CD8-positive, alpha-beta T cell (primary cell): ENCODE measurements at regions of chr18 and their contacts with region 1.

Region 1: DNA sequence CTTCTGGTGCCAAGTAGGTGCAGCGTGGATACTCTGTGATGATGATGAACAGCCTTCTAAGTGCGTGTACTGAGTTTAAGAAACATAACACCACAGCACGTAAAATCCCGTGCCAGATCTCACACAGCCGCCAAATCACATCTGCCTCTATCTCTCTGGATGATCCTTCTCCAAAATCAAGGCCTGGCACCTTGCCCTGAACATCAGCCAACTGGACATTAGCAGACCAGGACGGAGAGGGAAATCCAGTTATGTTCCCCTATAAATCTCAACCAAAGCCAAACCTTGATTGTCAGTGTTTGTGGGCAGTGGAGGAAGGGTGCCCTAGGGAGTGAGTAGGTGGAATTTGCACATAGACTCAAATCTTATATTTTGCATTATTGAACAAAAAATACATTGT is 164.3 kb downstream of the MIB1 start:
- DNase-seq: no peak
- ATAC-seq: no peak
- H3K4me3 ChIP-seq: no peak overlapping the region
- H3K4me3 Mint-ChIP-seq: no peak overlapping the region
- H3K27ac ChIP-seq: no peak overlapping the region
- H3K27ac Mint-ChIP-seq: no peak overlapping the region
- H3K4me1 ChIP-seq: no peaks in the 10 kb centered on the region
- H3K4me1 Mint-ChIP-seq: no peaks in the 10 kb centered on the region
- H3K27me3 ChIP-seq: no peaks in the 10 kb centered on the region
- H3K27me3 Mint-ChIP-seq: peaks cover 9% of the 10 kb centered on the region
- CTCF ChIP-seq: no peak

Region 2: DNA sequence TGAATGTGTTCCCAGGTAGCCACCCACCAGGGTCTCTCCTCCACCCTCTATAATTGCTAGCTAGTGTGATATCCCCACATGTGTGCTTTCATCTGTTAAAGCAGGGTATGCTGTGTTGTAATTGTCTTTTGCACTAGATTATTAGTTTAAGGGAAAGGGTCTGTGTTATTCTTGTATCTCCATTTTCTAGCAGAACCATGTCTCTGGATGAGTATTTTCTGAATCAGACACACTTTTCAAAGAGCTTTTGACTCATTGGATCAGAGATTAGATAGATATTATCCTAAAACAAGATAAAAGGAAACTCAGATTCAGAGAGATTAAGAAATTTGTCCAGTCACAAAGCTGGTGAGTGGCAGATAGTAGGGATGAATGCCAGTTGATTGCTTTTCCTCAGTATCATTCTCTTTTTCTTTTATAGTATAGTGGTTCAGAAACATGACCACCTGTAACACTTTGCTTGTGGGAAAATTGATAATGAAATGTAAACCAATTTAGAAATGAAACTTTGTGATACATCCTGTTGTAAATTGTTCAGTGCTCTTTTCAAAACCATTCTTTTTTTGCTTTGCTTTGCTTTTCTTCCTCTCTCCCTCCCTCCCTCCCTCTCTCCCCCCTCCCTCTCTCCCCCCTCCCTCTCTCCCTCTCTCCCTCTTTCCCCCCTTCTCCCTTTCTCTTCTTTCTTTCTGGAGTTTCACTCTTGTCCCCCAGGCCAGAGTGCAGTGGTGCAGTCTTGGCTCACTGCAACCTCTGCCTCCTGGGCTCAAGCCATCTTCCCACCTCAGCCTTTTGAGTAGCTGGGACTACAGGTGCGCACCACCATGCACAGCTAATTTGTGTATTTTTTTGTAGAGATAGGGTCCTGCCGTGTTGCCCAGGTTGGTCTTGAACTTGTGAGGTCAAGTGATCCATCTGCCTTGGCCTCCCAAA is 156.8 kb before region 1 on chr18:
- CTCF ChIA-PET with region 1: no interaction called
- POLR2A ChIA-PET with region 1: no interaction called
- intact Hi-C with region 1: no loop called
- DNase-seq: peak in 2 of 9 experiments; percentile 5 to 22
- ATAC-seq: no peak
- H3K4me3 ChIP-seq: no peak overlapping the region
- H3K4me3 Mint-ChIP-seq: no peak overlapping the region
- H3K27ac ChIP-seq: no peak overlapping the region
- H3K27ac Mint-ChIP-seq: peak overlapping the region; percentile 22
- H3K4me1 ChIP-seq: peaks cover 20% of the 10 kb centered on the region
- H3K4me1 Mint-ChIP-seq: peaks cover 52% of the 10 kb centered on the region
- H3K27me3 ChIP-seq: no peaks in the 10 kb centered on the region
- H3K27me3 Mint-ChIP-seq: no peaks in the 10 kb centered on the region
- CTCF ChIP-seq: no peak

Region 3: GRCh38 chr18:21851327-21851972 is 53.4 kb before region 1 on chr18:
- CTCF ChIA-PET with region 1: no interaction called
- POLR2A ChIA-PET with region 1: no interaction called
- intact Hi-C with region 1: no loop called
- DNase-seq: peak in 2 of 9 experiments; percentile 4 to 25
- ATAC-seq: no peak
- H3K4me3 ChIP-seq: no peak overlapping the region
- H3K4me3 Mint-ChIP-seq: no peak overlapping the region
- H3K27ac ChIP-seq: no peak overlapping the region
- H3K27ac Mint-ChIP-seq: no peak overlapping the region
- H3K4me1 ChIP-seq: no peaks in the 10 kb centered on the region
- H3K4me1 Mint-ChIP-seq: peaks cover 7% of the 10 kb centered on the region
- H3K27me3 ChIP-seq: no peaks in the 10 kb centered on the region
- H3K27me3 Mint-ChIP-seq: no peaks in the 10 kb centered on the region
- CTCF ChIP-seq: peak; percentile 50

Region 4: GRCh38 chr18:21918693-21919092 is 13.8 kb after region 1 on chr18:
- CTCF ChIA-PET with region 1: no interaction called
- POLR2A ChIA-PET with region 1: no interaction called
- intact Hi-C with region 1: loop called in 1 of 2 experiments (anchors 1 kb)
- DNase-seq: no peak
- ATAC-seq: no peak
- H3K4me3 ChIP-seq: no peak overlapping the region
- H3K4me3 Mint-ChIP-seq: no peak overlapping the region
- H3K27ac ChIP-seq: no peak overlapping the region
- H3K27ac Mint-ChIP-seq: no peak overlapping the region
- H3K4me1 ChIP-seq: no peaks in the 10 kb centered on the region
- H3K4me1 Mint-ChIP-seq: no peaks in the 10 kb centered on the region
- H3K27me3 ChIP-seq: peaks cover 0 to 2% of the 10 kb centered on the region in 2 experiments
- H3K27me3 Mint-ChIP-seq: peaks cover 8% of the 10 kb centered on the region
- CTCF ChIP-seq: no peak

Region 5: GRCh38 chr18:22044474-22045220 is 139.8 kb after region 1 on chr18:
- CTCF ChIA-PET with region 1: no interaction called
- POLR2A ChIA-PET with region 1: no interaction called
- intact Hi-C with region 1: no loop called
- DNase-seq: no peak
- ATAC-seq: no peak
- H3K4me3 ChIP-seq: no peak overlapping the region
- H3K4me3 Mint-ChIP-seq: no peak overlapping the region
- H3K27ac ChIP-seq: no peak overlapping the region
- H3K27ac Mint-ChIP-seq: no peak overlapping the region
- H3K4me1 ChIP-seq: no peaks in the 10 kb centered on the region
- H3K4me1 Mint-ChIP-seq: no peaks in the 10 kb centered on the region
- H3K27me3 ChIP-seq: no peaks in the 10 kb centered on the region
- H3K27me3 Mint-ChIP-seq: peaks cover 2% of the 10 kb centered on the region
- CTCF ChIP-seq: no peak